ENCODE measurements at regions of chr6 and their contacts with region 1.

Region 1: GRCh38 chr6:115544765-115545673 is 515.7 kb downstream of the FRK start:
- DNase-seq: peak; percentile 22
- ATAC-seq: peak; percentile 100
- H3K4me3 ChIP-seq: peak overlapping the region in 1 of 3 experiments; percentile 49; a peak in 2 of 6 replicates
- H3K27ac ChIP-seq: no peak overlapping the region
- H3K4me1 ChIP-seq: no peaks in the 10 kb centered on the region
- H3K27me3 ChIP-seq: no peaks in the 10 kb centered on the region; a peak in 1 of 5 replicates
- CTCF ChIP-seq: peak; percentile 88
- EP300 ChIP-seq: peak in 1 of 2 experiments; percentile 33; a peak in 1 of 4 replicates
- POLR2A ChIP-seq: no peak
- RAD21 ChIP-seq: peak; percentile 51

Region 2: GRCh38 chr6:113970805-113971676 is 1574.0 kb before region 1 on chr6 and contains the start of gene HDAC2:
- CTCF ChIA-PET with region 1: no interaction called
- POLR2A ChIA-PET with region 1: no interaction called
- in situ Hi-C with region 1: loop called (anchors 10 kb)
- intact Hi-C with region 1: no loop called
- DNase-seq: peak; percentile 67
- ATAC-seq: peak; percentile 84
- H3K4me3 ChIP-seq: peak within 1 kb of the TSS; percentile 85 to 88 (median 86)
- H3K27ac ChIP-seq: peak within 1 kb of the TSS; percentile 93
- H3K4me1 ChIP-seq: peaks cover 50% of the 10 kb centered on the region
- H3K27me3 ChIP-seq: no peaks in the 10 kb centered on the region; a peak in 1 of 5 replicates
- CTCF ChIP-seq: peak; percentile 34
- EP300 ChIP-seq: peak in 1 of 2 experiments; percentile 40; a peak in 1 of 4 replicates
- POLR2A ChIP-seq: peak; percentile 73 to 84
- RAD21 ChIP-seq: no peak; the same call in 1 of the 2 replicates
- total RNA-seq, gene HDAC2: 99.6 and 170 TPM in 2 replicates

Region 3: DNA sequence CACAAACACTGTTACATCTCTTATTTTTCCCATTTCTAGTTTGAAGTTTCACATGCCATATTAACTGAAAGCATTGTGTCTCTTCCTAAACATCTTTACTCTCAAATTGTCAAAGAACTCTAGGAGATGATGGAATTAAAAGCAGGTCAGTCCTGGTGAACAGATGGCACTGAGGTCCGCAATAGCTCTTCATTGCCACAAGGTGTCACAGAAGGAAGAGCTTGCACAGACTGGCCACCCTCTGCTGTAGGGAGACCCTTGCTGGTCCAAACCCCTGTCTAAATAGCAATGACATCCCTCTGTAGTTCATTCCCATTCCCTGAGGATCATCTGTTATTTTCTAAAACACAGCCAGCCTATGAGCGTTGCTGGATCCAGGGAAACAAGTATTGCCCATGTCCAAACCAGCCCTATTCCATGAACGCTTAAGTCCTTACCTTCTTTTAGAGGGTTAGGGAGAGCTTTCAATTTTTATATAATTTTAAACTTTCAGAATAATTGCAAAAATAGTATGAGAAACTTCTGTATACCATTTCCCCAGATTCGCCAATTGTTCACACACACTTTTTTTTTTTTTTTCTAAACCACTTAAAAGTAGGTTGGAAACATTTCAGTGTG is 1564.0 kb before region 1 on chr6:
- CTCF ChIA-PET with region 1: no interaction called
- POLR2A ChIA-PET with region 1: no interaction called
- in situ Hi-C with region 1: loop called (anchors 10 kb)
- intact Hi-C with region 1: loop called (anchors 5 kb)
- DNase-seq: peak; percentile 45
- ATAC-seq: peak; percentile 99
- H3K4me3 ChIP-seq: no peak overlapping the region
- H3K27ac ChIP-seq: no peak overlapping the region
- H3K4me1 ChIP-seq: peaks cover 15% of the 10 kb centered on the region
- H3K27me3 ChIP-seq: no peaks in the 10 kb centered on the region
- CTCF ChIP-seq: peak; percentile 70
- EP300 ChIP-seq: no peak
- POLR2A ChIP-seq: no peak
- RAD21 ChIP-seq: no peak; the same call in 1 of the 2 replicates

Region 4: DNA sequence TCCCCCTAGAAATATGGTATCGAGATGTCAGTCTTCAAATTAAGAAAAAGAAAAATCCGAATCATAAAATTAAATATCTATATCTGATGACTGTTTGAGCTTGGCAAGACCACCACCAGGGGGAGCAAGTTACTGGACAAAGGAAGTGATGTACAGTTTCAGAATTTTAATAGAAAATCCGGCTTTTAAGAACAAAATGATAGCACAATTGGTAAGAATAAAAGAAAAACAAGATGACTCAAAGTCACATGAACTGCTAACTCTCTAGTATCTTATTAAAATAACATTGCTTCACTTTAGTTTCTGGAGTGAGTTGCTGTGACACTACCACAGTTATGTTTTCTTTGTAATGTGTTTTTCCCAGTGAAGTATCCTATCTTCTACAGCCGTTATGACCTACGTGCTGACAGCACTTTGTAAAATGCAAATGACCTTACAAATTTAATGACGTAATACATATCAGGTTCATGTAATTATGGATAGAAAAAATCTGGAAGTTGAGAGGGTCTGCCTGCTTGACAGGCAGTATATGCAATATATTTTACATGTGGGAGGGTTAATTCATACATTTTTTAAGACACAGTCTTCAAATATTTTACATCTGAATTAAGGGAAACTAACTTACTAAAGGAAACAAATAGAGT is 796.9 kb before region 1 on chr6:
- CTCF ChIA-PET with region 1: interaction called, 5 read pairs
- POLR2A ChIA-PET with region 1: no interaction called
- in situ Hi-C with region 1: loop called (anchors 10 kb)
- intact Hi-C with region 1: loop called (anchors 1 kb)
- DNase-seq: peak; percentile 21
- ATAC-seq: no peak
- H3K4me3 ChIP-seq: no peak overlapping the region
- H3K27ac ChIP-seq: no peak overlapping the region
- H3K4me1 ChIP-seq: no peaks in the 10 kb centered on the region
- H3K27me3 ChIP-seq: no peaks in the 10 kb centered on the region; a peak in 1 of 5 replicates
- CTCF ChIP-seq: peak; percentile 47
- EP300 ChIP-seq: no peak
- POLR2A ChIP-seq: no peak
- RAD21 ChIP-seq: no peak

Region 5: DNA sequence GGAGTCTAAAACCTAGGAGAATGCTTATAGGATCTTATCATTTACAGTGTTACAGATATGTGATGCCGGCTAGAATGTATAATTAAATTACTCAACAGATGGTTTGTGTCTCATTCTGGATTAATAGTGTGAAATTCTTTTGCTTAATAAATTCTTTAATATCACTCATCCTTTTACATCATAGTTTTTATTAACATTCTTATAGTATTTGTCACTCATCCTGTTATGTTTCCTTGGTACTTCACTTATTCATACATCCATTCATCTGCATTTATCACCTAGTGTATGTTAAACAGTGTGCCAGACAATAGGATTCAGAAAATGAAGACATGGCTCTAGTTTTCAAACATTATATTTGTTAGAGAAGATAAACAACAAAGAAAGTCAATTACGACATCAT is 47.0 kb after region 1 on chr6:
- CTCF ChIA-PET with region 1: no interaction called
- POLR2A ChIA-PET with region 1: no interaction called
- in situ Hi-C with region 1: no loop called
- intact Hi-C with region 1: no loop called
- DNase-seq: no peak
- ATAC-seq: no peak
- H3K4me3 ChIP-seq: no peak overlapping the region
- H3K27ac ChIP-seq: no peak overlapping the region
- H3K4me1 ChIP-seq: no peaks in the 10 kb centered on the region
- H3K27me3 ChIP-seq: no peaks in the 10 kb centered on the region
- CTCF ChIP-seq: no peak
- EP300 ChIP-seq: no peak
- POLR2A ChIP-seq: no peak
- RAD21 ChIP-seq: no peak

Region 6: GRCh38 chr6:115896538-115897129 is 351.6 kb after region 1 on chr6:
- CTCF ChIA-PET with region 1: no interaction called
- POLR2A ChIA-PET with region 1: no interaction called
- in situ Hi-C with region 1: no loop called
- intact Hi-C with region 1: loop called (anchors 10 kb)
- DNase-seq: peak; percentile 14
- ATAC-seq: peak; percentile 73
- H3K4me3 ChIP-seq: no peak overlapping the region
- H3K27ac ChIP-seq: no peak overlapping the region
- H3K4me1 ChIP-seq: peaks cover 8% of the 10 kb centered on the region
- H3K27me3 ChIP-seq: no peaks in the 10 kb centered on the region; a peak in 1 of 5 replicates
- CTCF ChIP-seq: peak; percentile 68
- EP300 ChIP-seq: no peak
- POLR2A ChIP-seq: no peak
- RAD21 ChIP-seq: peak; percentile 29; the same call in 1 of the 2 replicates